ENCODE measurements at regions of chr5 and their contacts with region 1.

Region 1: DNA sequence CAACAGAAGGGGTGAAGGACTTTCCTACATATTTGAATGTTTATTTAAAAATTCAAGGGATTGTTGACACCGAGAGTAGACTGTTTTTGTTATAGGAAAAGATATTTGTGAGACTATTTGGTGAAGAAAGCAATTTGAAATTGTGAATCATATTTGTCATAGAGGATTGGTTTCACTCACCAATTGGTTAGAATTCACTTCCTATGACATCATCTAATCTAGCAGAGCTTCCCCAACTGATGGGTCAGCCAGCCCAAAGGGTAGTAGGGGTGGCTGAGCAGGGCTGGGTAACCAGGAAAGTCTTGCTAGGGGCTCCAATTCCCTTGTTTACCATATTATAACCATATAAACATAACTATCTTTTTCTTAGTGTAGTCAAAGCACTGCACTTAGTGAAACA is 14.9 kb upstream of the MEGF10 start:
- DNase-seq: no peak
- ATAC-seq: no peak
- H3K4me3 ChIP-seq: no peak overlapping the region
- H3K27ac ChIP-seq: no peak overlapping the region
- H3K4me1 ChIP-seq: no peaks in the 10 kb centered on the region
- H3K27me3 ChIP-seq: no peaks in the 10 kb centered on the region
- CTCF ChIP-seq: no peak
- POLR2A ChIP-seq: no peak

Region 2: DNA sequence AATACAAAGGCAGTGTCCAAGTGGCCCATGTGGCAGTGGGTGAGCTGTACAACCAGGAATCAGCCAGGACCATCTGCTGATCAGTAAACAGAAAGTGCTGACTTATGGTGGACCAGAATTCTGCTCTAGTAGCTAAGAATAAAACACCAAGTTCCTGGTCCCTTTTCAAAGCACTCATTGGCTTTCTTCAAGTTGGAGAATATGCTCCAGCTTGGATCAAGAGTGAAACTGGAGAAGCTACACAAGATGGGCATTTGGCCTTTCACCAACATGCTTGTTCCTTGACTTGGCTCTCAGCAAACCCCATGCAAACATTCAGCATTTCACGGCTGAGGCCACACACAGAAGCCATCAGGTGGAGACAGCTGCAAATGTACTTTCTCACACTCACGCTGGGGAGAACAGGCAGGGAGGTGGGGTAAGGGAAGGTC is 277.5 kb before region 1 on chr5:
- in situ Hi-C with region 1: no loop called
- intact Hi-C with region 1: no loop called
- DNase-seq: peak; percentile 32 to 67
- ATAC-seq: peak; percentile 88 to 91
- H3K4me3 ChIP-seq: peak overlapping the region in 2 of 4 donors; percentile 17 to 23
- H3K27ac ChIP-seq: peak overlapping the region; percentile 57 to 79 (median 73)
- H3K4me1 ChIP-seq: peaks cover 20 to 33% of the 10 kb centered on the region in 2 donors
- H3K27me3 ChIP-seq: no peaks in the 10 kb centered on the region
- CTCF ChIP-seq: no peak
- POLR2A ChIP-seq: no peak

Region 3: DNA sequence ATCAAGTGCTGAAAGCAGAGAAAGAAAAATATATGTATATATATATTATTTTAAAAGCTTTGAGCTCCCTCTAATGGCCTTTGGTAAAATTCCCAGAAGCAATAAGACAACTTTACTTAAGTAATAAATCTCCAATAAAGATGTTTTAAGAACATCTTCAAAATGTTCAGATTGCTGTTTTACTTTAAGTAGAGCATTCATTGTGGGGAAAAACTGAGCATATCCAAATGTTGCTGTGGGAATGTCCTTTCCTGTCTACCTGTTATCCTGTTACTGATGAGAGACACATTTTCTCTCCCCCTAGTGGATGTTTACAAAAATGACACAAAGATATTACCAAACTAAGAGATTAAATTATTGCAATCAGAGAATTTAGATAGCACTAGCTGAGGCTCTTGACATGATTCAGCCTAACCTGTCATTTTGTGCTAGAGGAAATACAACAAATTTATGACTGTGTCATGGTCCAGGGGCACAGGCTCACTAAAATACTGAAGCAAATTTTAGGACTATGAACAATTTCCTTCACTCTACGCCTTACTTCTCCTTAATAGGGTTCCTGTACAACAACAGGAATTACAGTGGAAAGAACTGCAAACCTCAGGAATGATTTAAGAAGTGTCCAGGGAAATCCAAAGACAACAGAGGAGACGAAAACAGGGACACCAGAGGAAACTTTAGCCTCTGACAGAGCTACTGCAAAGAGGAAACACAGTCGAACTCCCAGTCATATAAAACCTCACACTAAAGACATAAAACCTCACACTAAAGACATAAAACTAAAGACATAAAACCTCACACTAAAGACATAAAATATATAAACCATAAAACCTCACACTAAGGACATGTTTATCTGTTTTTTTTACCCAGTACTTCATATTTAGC is 217.4 kb after region 1 on chr5:
- in situ Hi-C with region 1: loop called in 1 of 4 experiments (anchors 5 kb)
- intact Hi-C with region 1: no loop called
- DNase-seq: no peak
- ATAC-seq: peak; percentile 65 to 69
- H3K4me3 ChIP-seq: no peak overlapping the region
- H3K27ac ChIP-seq: no peak overlapping the region
- H3K4me1 ChIP-seq: no peaks in the 10 kb centered on the region
- H3K27me3 ChIP-seq: no peaks in the 10 kb centered on the region
- CTCF ChIP-seq: peak; percentile 52 to 67 (median 58)
- POLR2A ChIP-seq: no peak